Breast epithelium (tissue), 4 donors: ENCODE measurements at regions of chr3 and their contacts with region 1.

Region 1: DNA sequence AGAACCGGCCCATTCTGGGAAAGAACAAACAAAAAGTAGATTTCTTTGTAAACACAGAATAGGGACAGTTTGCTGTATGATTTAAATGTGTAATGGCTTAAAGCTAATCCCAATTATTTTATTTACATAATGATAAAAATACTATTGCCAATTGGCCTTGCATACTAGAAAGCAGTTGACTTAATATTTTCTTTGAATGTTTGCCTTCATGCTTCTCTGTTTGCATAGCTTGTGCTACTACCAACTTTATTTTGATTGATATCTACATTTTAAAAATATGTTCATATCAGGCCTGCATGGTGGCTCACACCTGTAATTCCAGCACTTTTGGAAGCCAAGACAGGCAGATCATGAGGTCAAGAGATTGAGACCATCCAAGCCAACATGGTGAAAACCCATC is 417.8 kb downstream of the DIPK2A start:
- DNase-seq: no peak
- H3K4me3 ChIP-seq: no peak overlapping the region
- H3K27ac ChIP-seq: no peak overlapping the region
- H3K4me1 ChIP-seq: no peaks in the 10 kb centered on the region
- H3K27me3 ChIP-seq: no peaks in the 10 kb centered on the region
- CTCF ChIP-seq: no peak
- POLR2A ChIP-seq: no peak

Region 2: DNA sequence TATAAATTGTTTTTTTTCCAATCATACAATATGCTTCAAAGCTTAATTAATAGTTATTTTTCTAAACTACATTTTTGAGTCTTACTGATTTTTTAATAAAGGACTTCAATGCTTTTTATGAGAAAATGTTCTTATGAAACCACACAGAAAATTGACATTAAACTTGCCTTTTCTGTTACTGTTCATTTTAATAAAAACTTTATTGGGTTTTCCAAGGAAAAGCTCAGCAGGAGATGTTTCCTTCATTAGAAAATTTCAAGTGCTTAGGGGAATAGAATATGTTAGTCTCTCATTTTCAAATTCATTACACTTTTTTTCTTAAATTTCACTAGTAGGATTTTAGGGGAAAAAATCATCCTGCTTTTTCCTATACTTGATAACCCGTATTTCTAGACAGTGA is 293.6 kb after region 1 on chr3:
- intact Hi-C with region 1: loop called (anchors 5 kb)
- DNase-seq: no peak
- H3K4me3 ChIP-seq: no peak overlapping the region
- H3K27ac ChIP-seq: no peak overlapping the region
- H3K4me1 ChIP-seq: no peaks in the 10 kb centered on the region
- H3K27me3 ChIP-seq: no peaks in the 10 kb centered on the region
- CTCF ChIP-seq: no peak
- POLR2A ChIP-seq: no peak